T-cell (primary cell): ENCODE measurements at regions of chr14 and their contacts with region 1.

Region 1: GRCh38 chr14:61295806-61296550 is 14.8 kb upstream of the TMEM30B start:
- DNase-seq: no peak
- ATAC-seq: peak in 3 of 4 experiments; percentile 30 to 47 (median 31)
- H3K4me3 ChIP-seq: no peak overlapping the region
- H3K4me3 Mint-ChIP-seq: no peak overlapping the region
- H3K27ac ChIP-seq: no peak overlapping the region
- H3K27ac Mint-ChIP-seq: peak overlapping the region in 1 of 2 donors; percentile 37
- H3K4me1 ChIP-seq: peaks cover 25 to 29% of the 10 kb centered on the region in 2 experiments
- H3K4me1 Mint-ChIP-seq: peaks cover 48 to 51% (median 50%) of the 10 kb centered on the region in 3 donors
- H3K27me3 ChIP-seq: no peaks in the 10 kb centered on the region
- H3K27me3 Mint-ChIP-seq: no peaks in the 10 kb centered on the region

Region 2: GRCh38 chr14:60980811-60981632 is 315.0 kb before region 1 on chr14 and contains the starts of genes SLC38A6 and TRMT5:
- CTCF ChIA-PET with region 1: interaction called in 1 of 2 experiments, 3 read pairs
- POLR2A ChIA-PET with region 1: interaction called in 1 of 2 experiments, 12 read pairs
- DNase-seq: peak; percentile 83 to 96 (median 89)
- ATAC-seq: peak; percentile 88 to 92 (median 91)
- H3K4me3 ChIP-seq: peak within 1 kb of the TSS; percentile 99
- H3K4me3 Mint-ChIP-seq: no peak within 1 kb of the TSS
- H3K27ac ChIP-seq: peak within 1 kb of the TSS; percentile 94
- H3K27ac Mint-ChIP-seq: no peak within 1 kb of the TSS
- H3K4me1 ChIP-seq: peaks cover 12 to 19% of the 10 kb centered on the region in 2 experiments
- H3K4me1 Mint-ChIP-seq: peaks cover 24 to 30% (median 25%) of the 10 kb centered on the region in 3 donors
- H3K27me3 ChIP-seq: no peaks in the 10 kb centered on the region
- H3K27me3 Mint-ChIP-seq: no peaks in the 10 kb centered on the region
- total RNA-seq, gene SLC38A6: 11.1 to 20.3 (median 14.2) TPM
- total RNA-seq, gene TRMT5: 3.6 to 7.6 (median 5.7) TPM

Region 3: GRCh38 chr14:61950340-61950739 is 654.4 kb after region 1 on chr14:
- CTCF ChIA-PET with region 1: no interaction called
- POLR2A ChIA-PET with region 1: no interaction called
- DNase-seq: no peak
- ATAC-seq: no peak
- H3K4me3 ChIP-seq: no peak overlapping the region
- H3K4me3 Mint-ChIP-seq: no peak overlapping the region
- H3K27ac ChIP-seq: no peak overlapping the region
- H3K27ac Mint-ChIP-seq: no peak overlapping the region
- H3K4me1 ChIP-seq: no peaks in the 10 kb centered on the region
- H3K4me1 Mint-ChIP-seq: no peaks in the 10 kb centered on the region
- H3K27me3 ChIP-seq: no peaks in the 10 kb centered on the region
- H3K27me3 Mint-ChIP-seq: peaks cover 5 to 8% of the 10 kb centered on the region in 2 donors